Cardiac septum (tissue), 1 donor: ENCODE measurements at regions of chr9 and their contacts with region 1.

Region 1: GRCh38 chr9:109779711-109780452 is at the start of gene PALM2AKAP2:
- DNase-seq: peak; percentile 81
- total RNA-seq, gene PALM2AKAP2: 165 TPM

Region 2: DNA sequence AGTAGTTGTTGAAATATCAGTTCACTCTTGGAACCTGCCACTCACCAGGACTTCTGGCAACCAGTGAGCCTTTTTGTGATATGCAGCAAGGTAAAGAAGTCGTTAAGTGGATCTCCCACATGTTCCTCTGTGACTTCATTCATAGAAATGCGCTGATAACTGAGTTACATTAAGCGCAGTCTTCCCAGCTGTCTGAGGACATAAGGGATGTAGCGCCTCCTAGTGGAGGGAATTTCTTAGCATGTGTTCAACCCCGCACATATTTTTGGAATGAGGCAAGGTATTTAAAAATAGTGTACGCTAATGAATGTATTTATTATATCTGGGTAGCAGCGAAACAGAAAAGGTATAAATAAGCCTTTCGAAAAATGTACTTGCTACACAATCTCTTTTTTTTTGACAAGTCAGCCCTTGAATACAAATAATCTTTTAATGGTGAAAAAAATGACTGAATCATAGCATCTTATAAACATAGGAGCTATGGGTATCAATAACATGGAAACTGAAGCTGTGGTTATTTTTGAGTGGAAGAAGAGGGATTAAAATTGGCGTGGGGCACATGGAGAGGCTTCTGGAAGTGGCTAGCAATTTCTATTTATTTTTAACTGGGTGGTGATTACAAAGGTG is 38.1 kb after region 1 on chr9:
- intact Hi-C with region 1: loop called (anchors 2 kb)
- DNase-seq: no peak

Region 3: GRCh38 chr9:109887079-109887478 is 107.2 kb after region 1 on chr9:
- intact Hi-C with region 1: loop called (anchors 2 kb)
- DNase-seq: no peak